GM13977 (cell line): ENCODE measurements at regions of chr6 and their contacts with region 1.

Region 1: DNA sequence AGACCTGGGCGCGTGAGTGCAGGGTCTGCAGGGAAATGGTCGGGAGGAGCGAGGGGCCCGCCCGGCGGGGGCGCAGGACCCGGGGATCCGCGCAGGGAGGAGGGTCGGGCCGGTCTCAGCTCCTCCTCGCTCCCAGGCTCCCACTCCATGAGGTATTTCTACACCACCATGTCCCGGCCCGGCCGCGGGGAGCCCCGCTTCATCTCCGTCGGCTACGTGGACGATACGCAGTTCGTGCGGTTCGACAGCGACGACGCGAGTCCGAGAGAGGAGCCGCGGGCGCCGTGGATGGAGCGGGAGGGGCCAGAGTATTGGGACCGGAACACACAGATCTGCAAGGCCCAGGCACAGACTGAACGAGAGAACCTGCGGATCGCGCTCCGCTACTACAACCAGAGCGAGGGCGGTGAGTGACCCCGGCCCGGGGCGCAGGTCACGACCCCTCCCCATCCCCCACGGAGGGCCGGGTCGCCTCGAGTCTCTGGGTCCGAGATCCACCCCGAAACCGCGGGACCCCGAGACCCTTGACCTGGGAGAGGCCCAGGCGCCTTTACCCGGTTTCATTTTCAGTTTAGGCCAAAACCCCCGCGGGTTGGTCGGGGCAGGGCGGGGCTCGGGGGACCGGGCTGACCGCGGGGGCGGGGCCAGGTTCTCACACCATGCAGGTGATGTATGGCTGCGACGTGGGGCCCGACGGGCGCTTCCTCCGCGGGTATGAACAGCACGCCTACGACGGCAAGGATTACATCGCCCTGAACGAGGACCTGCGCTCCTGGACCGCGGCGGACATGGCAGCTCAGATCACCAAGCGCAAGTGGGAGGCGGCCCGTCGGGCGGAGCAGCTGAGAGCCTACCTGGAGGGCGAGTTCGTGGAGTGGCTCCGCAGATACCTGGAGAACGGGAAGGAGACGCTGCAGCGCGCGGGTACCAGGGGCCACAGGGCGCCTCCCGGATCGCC is 54.2 kb upstream of the HLA-A start:
- DNase-seq: peak; percentile 85
- CTCF ChIP-seq: no peak

Region 2: GRCh38 chr6:29942275-29943052 is 54.4 kb after region 1 on chr6 and contains the start of gene HLA-A:
- in situ Hi-C with region 1: loop called (anchors 5 kb)
- DNase-seq: peak; percentile 93
- CTCF ChIP-seq: no peak